Colonic mucosa (tissue), 4 donors: ENCODE measurements at regions of chr21 and their contacts with region 1.

Region 1: GRCh38 chr21:44428281-44428942 is 26.9 kb upstream of the LRRC3 start:
- DNase-seq: peak; percentile 88
- H3K4me3 ChIP-seq: no peak overlapping the region
- H3K27ac ChIP-seq: no peak overlapping the region
- H3K4me1 ChIP-seq: no peaks in the 10 kb centered on the region
- H3K27me3 ChIP-seq: no peaks in the 10 kb centered on the region
- CTCF ChIP-seq: no peak

Region 2: DNA sequence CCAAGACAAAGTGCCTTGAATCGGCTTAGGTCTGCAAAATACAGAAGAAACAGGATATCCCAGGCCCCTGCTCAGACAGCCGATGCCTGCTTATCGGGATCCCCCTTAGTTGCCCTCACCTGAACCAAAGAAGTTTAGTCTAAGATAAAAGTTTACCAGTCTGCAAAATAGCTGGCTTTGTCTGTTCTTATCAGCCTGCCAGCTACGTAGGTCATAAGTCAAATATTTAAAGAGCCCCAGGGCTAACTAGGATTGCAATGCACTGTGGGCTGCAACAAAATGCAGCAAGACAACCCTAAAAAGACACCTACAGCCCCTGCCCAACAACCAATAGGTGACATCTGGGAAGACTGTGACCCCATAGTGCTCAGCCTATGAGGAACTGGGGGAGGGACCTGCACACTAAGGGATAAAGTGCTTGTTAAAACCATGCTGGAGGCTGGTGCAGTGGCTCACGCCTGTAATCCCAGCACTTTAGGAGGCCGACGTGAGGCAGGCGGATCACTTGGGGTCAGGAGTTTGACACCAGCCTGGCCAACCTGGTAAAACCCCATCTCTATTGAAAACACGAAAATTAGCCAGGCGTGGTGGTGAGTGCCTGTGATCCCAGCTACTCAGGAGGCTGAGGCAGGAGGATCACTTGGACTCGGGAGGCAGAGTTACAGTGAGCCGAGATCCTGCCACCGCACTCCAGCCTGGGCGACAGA is 54.3 kb after region 1 on chr21:
- intact Hi-C with region 1: loop called (anchors 5 kb)
- DNase-seq: no peak
- H3K4me3 ChIP-seq: no peak overlapping the region
- H3K27ac ChIP-seq: no peak overlapping the region
- H3K4me1 ChIP-seq: no peaks in the 10 kb centered on the region
- H3K27me3 ChIP-seq: no peaks in the 10 kb centered on the region
- CTCF ChIP-seq: no peak